Activated CD8-positive, alpha-beta T cell treated with anti-CD3 and anti-CD28 coated beads, Interleukin-2, amount 10 ng/mL, durations not matched to agents 7 days and 5 days (primary cell): ENCODE measurements at regions of chr15 and their contacts with region 1.

Region 1: GRCh38 chr15:71400294-71400693 is 285.0 kb downstream of the THSD4 start:
- DNase-seq: no peak
- ATAC-seq: no peak
- H3K4me3 Mint-ChIP-seq: no peak overlapping the region
- H3K27ac Mint-ChIP-seq: no peak overlapping the region
- H3K4me1 Mint-ChIP-seq: no peaks in the 10 kb centered on the region
- H3K27me3 Mint-ChIP-seq: no peaks in the 10 kb centered on the region

Region 2: GRCh38 chr15:71386448-71387236 is 13.7 kb before region 1 on chr15:
- CTCF ChIA-PET with region 1: interaction called, 11 read pairs
- POLR2A ChIA-PET with region 1: no interaction called
- DNase-seq: no peak
- ATAC-seq: no peak
- H3K4me3 Mint-ChIP-seq: no peak overlapping the region
- H3K27ac Mint-ChIP-seq: no peak overlapping the region
- H3K4me1 Mint-ChIP-seq: no peaks in the 10 kb centered on the region
- H3K27me3 Mint-ChIP-seq: peaks cover 33% of the 10 kb centered on the region

Region 3: DNA sequence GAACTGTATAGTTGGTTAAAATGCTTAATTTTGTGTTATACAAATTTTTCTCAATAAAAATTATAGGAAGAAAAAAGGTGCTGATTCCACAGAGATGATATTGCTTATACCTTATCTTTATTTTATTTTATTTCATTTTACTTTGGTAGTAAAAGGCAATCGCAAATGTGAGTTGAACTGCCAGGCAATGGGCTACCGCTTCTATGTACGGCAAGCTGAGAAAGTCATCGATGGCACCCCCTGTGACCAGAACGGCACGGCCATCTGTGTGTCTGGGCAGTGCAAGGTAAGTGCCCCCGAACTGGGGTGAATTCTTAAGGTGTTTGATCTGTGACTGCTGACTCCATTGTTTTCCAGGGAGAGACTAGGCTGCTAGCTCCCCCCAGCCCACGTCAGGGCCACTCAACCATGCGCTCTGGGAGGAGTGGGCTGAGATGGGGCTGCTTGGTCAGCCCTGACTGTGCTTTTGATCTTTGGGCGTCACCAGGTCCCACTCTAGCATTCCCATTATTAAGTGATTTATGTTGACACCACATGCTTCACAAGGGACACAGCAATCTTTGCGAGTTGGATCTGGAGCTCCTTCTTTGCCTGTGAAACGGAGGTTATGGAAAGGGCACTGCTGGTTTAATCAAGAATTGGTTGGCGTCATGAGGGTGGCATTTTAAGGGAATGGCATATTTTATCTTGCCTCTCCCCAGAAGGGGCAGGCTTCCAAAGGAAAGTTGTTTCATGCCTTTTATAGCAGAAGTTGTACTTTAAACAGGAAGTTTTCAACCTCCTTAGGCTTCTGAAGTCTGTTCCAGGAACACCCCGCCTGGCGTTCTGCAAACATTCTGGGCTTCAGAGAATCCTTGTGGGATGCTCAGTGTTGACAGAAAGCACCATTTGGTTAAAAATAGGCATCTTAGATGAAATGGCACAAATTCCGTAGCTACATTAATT is 11.5 kb after region 1 on chr15:
- CTCF ChIA-PET with region 1: no interaction called
- POLR2A ChIA-PET with region 1: no interaction called
- DNase-seq: no peak
- ATAC-seq: no peak
- H3K4me3 Mint-ChIP-seq: no peak overlapping the region
- H3K27ac Mint-ChIP-seq: no peak overlapping the region
- H3K4me1 Mint-ChIP-seq: no peaks in the 10 kb centered on the region
- H3K27me3 Mint-ChIP-seq: peaks cover 2% of the 10 kb centered on the region